K562 (cell line): ENCODE measurements at regions of chr4 and their contacts with region 1.

Region 1: GRCh38 chr4:40933272-40934053 is 183.7 kb downstream of the NSUN7 start:
- DNase-seq: no peak
- ATAC-seq: no peak
- H3K4me3 ChIP-seq: no peak overlapping the region
- H3K27ac ChIP-seq: no peak overlapping the region
- H3K4me1 ChIP-seq: no peaks in the 10 kb centered on the region
- H3K27me3 ChIP-seq: peaks cover 0 to 12% of the 10 kb centered on the region in 2 experiments; a peak in 2 of 5 replicates
- CTCF ChIP-seq: no peak
- EP300 ChIP-seq: no peak
- POLR2A ChIP-seq: no peak
- RAD21 ChIP-seq: no peak

Region 2: GRCh38 chr4:39900966-39901365 is 1032.5 kb before region 1 on chr4:
- CTCF ChIA-PET with region 1: no interaction called
- POLR2A ChIA-PET with region 1: no interaction called
- in situ Hi-C with region 1: no loop called
- intact Hi-C with region 1: no loop called
- DNase-seq: no peak
- ATAC-seq: no peak
- H3K4me3 ChIP-seq: no peak overlapping the region
- H3K27ac ChIP-seq: no peak overlapping the region
- H3K4me1 ChIP-seq: no peaks in the 10 kb centered on the region
- H3K27me3 ChIP-seq: no peaks in the 10 kb centered on the region
- CTCF ChIP-seq: no peak
- EP300 ChIP-seq: no peak
- POLR2A ChIP-seq: no peak
- RAD21 ChIP-seq: no peak

Region 3: GRCh38 chr4:41644288-41644914 is 710.9 kb after region 1 on chr4:
- CTCF ChIA-PET with region 1: no interaction called
- POLR2A ChIA-PET with region 1: no interaction called
- in situ Hi-C with region 1: no loop called
- intact Hi-C with region 1: loop called (anchors 10 kb)
- DNase-seq: peak; percentile 56 to 67 (median 58)
- ATAC-seq: peak; percentile 100
- H3K4me3 ChIP-seq: no peak overlapping the region
- H3K27ac ChIP-seq: no peak overlapping the region
- H3K4me1 ChIP-seq: peaks cover 0 to 5% of the 10 kb centered on the region in 2 experiments; a peak in 1 of 5 replicates
- H3K27me3 ChIP-seq: no peaks in the 10 kb centered on the region
- CTCF ChIP-seq: peak; percentile 75 to 93 (median 77)
- EP300 ChIP-seq: no peak
- POLR2A ChIP-seq: no peak
- RAD21 ChIP-seq: peak; percentile 42 to 64